Activated CD4-positive, alpha-beta memory T cell treated with anti-CD3 and anti-CD28 coated beads, Interleukin-2, amount 10 ng/mL, durations not matched to agents 7 days and 5 days (primary cell): ENCODE measurements at regions of chr1 and their contacts with region 1.

Region 1: DNA sequence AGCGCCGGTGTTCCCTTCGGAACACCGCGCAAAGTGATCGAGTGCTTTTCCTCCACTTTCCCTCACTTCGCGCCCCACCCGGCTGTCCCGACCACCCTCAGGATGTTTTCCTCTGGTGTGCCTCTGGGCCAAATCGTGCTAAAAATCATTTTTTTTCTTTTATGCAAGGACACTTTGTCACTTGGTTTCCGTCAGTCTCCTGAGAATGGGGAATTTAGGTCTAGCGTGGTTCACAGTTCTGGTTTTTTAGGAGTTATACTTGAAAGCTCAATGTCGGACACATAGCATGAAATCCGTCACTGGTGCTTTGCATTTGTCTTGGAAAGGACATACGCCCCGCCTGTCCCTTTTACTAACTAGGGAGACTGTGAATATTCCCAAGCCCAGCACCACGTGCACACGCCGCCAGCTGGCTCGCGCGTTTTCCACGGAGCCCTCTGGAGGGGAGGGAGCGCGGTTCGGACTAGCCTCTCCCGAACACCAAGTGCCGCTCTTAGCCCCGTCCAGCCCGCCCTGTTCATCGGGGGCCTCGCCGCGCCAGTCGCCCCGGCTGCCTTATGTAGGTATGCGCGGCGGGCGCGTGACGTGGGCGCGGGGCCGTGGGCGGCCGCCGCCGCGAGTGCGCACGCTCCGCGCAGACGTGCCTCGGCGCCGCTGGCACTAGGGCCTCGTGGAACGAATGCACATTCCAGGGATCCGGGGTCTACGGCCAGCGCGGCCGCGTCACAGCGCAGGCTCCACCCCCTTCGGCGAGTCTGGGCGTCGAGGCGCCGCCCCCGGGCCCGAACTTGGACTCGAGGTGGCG is 572 bp upstream of the IRF2BP2 start:
- DNase-seq: peak; percentile 90
- H3K4me3 Mint-ChIP-seq: peak overlapping the region; percentile 82
- H3K27ac Mint-ChIP-seq: peak overlapping the region; percentile 95
- H3K4me1 Mint-ChIP-seq: peaks cover 44% of the 10 kb centered on the region
- H3K27me3 Mint-ChIP-seq: no peaks in the 10 kb centered on the region

Region 2: DNA sequence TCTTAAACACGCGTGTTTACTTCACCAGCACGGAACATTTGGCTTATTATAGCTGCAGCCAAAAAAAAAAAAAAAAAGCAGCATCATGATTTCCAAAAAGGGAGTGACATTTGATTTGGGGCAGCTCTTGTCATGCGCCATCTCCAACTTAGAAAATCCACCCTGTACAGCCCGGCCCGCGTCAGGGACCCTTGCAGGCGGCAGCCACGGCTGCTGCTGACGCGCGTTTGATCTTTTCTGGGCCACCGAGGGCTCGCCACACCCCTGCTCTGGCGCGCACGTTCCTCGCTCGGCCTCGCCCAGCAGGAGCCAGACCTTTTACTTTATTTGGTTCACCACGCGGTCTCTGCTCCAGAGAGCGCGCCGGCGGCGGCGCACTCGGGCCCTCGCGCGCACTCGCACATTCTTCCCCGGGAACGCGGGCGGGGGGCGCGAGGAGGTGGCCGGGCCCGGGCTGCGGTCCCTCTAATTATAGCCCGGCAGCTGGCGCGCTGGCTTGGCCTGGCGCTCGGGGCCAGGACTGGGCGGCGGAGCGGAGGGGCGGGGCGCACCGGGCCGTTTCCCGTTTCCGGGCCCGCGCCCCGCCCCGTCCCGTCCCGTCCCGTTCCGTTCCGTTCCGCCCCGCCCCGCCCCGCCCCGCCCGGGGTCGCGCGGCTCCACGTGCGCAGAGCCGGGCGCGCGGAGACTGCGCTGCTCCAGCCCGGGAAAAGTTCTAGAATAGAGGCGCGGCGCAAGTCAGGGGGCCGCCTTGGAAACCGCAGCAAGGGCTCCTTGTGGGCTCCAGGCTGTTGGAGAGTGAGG is 10.7 kb before region 1 on chr1:
- CTCF ChIA-PET with region 1: interaction called, 11 read pairs
- POLR2A ChIA-PET with region 1: interaction called, 152 read pairs
- DNase-seq: peak; percentile 77
- H3K4me3 Mint-ChIP-seq: peak overlapping the region; percentile 85
- H3K27ac Mint-ChIP-seq: peak overlapping the region; percentile 96
- H3K4me1 Mint-ChIP-seq: peaks cover 52% of the 10 kb centered on the region
- H3K27me3 Mint-ChIP-seq: no peaks in the 10 kb centered on the region

Region 3: DNA sequence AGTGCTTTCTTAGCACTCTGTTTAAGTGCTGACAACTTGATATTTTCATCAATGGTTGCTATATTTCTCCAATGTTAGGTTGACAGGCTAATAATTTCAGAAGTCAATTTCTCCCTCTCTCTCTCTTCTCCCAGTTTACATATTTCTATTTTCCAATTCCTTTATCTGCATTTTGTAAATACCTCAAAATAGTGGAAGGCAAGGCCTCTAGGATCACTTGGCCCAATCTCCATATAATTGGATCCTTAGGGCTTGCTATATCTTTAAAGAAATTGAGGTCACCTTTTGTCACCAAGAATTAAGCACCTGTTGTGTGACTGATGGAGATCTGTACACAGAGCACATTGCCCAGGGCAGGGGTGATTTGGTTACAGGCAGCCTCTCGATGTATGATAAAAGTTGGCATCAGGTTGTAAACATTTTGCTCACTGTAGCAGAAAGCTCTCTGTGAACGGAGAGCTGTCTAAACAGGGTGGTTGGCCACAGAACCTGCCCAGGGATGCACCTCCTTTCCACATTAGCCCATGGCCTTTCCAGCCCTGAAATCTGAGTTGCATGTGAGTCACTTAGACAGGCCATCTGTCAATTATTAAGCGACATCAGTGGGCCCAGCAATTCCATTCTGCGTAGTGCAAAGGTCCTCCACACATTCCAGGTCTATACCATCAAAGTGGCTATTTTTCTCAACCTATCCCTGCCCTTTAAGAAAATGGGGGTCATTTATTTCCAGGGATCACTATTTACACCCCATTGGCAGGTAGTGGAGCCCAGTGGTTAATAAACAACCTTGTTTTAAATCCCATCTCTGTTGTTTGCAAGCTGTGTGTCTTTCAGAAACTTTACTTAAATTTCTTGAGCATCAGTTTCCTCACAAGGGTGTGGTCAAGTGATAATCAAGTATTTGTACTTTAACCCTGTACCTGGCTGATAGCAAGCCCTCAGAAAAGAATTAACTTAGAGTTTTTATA is 28.6 kb after region 1 on chr1:
- CTCF ChIA-PET with region 1: no interaction called
- POLR2A ChIA-PET with region 1: no interaction called
- DNase-seq: no peak
- H3K4me3 Mint-ChIP-seq: no peak overlapping the region
- H3K27ac Mint-ChIP-seq: no peak overlapping the region
- H3K4me1 Mint-ChIP-seq: peaks cover 2% of the 10 kb centered on the region
- H3K27me3 Mint-ChIP-seq: peaks cover 2% of the 10 kb centered on the region

Region 4: GRCh38 chr1:234730770-234731568 is 120.4 kb after region 1 on chr1:
- CTCF ChIA-PET with region 1: interaction called, 29 read pairs
- POLR2A ChIA-PET with region 1: interaction called, 180 read pairs
- DNase-seq: peak; percentile 59
- H3K4me3 Mint-ChIP-seq: peak overlapping the region; percentile 38
- H3K27ac Mint-ChIP-seq: peak overlapping the region; percentile 92
- H3K4me1 Mint-ChIP-seq: peaks cover 68% of the 10 kb centered on the region
- H3K27me3 Mint-ChIP-seq: no peaks in the 10 kb centered on the region

Region 5: GRCh38 chr1:234925440-234926263 is 315.1 kb after region 1 on chr1:
- CTCF ChIA-PET with region 1: interaction called, 5 read pairs
- POLR2A ChIA-PET with region 1: interaction called, 38 read pairs
- DNase-seq: no peak
- H3K4me3 Mint-ChIP-seq: peak overlapping the region; percentile 53
- H3K27ac Mint-ChIP-seq: peak overlapping the region; percentile 87
- H3K4me1 Mint-ChIP-seq: peaks cover 40% of the 10 kb centered on the region
- H3K27me3 Mint-ChIP-seq: no peaks in the 10 kb centered on the region

Region 6: DNA sequence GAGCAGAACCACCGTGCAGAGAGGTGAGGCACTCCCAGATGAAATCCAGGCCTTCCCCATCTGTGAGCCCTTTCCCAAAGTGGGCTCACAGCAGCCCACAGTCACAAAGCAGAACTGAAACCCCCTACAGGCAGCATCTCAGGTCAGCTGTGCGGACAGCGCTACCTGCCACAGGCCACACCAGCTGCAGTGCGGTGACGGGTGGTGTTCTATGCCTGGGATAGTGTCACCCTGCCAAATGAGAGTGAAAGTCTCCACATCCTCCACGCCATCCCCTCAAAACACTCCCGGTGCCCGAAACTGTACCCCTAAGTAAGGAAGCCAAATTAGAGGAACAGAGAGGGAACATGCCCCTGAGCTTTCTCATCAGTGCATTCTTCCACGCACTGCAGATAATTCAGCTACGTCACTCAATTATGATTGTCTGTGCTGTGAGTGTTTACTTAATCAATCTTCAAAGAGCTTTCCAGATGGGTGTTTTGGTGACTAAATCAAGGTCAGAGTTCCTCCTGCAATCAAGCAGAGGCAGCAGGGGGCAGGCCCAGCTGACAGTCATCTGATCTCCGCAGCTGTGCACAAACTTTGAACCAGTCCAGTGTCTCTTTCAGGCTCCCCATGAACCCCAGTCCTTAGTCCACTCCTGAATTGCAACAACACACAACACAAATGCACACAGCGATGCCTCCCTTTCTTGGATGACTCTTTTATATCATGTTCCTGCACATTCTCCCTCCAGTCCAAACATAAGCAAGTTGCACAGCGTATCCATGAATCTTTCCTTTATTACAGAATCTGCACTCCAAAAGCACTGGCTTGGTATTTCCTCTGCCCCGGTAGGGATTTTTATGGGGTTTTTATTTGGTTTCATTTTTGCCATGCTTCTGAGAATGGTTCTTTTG is 368.1 kb after region 1 on chr1:
- CTCF ChIA-PET with region 1: interaction called, 3 read pairs
- POLR2A ChIA-PET with region 1: interaction called, 45 read pairs
- DNase-seq: peak; percentile 69
- H3K4me3 Mint-ChIP-seq: peak overlapping the region; percentile 71
- H3K27ac Mint-ChIP-seq: peak overlapping the region; percentile 94
- H3K4me1 Mint-ChIP-seq: peaks cover 83% of the 10 kb centered on the region
- H3K27me3 Mint-ChIP-seq: no peaks in the 10 kb centered on the region

Region 7: DNA sequence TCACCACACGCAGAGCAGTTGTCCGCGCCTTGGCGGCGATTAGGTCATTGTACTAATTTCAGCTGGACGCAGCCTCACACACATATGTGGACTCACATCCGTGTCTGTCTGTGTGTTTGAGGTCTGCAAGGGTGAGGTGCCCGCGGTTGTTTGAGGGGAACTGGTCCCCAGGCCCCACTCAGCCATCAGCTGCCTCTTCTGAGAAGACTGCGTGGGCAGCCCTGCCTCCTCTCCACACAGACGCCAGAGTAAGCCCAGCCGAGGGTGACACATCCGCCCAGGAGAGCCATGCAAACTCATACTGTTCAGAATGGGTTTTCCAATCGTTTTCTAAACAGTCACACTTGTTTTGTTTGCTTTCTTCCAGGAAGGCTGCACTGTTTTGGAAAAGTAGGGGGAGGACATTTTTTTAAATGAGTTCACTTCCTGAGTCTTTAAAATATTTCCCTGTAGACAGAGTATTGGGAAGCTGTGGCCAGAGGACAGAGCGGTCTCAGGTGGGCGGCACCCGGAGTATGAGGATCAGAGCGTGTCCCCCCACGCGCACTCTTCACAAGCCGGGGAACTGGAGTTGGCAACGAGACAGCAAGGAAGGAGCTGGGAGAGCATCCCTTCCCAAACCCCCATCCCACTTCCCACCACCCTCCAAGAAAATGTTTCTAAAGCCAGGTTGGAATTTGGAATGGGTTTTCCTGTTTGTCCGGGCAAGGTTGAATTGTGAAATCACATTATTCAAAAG is 464.8 kb after region 1 on chr1:
- CTCF ChIA-PET with region 1: no interaction called
- POLR2A ChIA-PET with region 1: interaction called, 31 read pairs
- DNase-seq: peak; percentile 75
- H3K4me3 Mint-ChIP-seq: peak overlapping the region; percentile 51
- H3K27ac Mint-ChIP-seq: peak overlapping the region; percentile 91
- H3K4me1 Mint-ChIP-seq: peaks cover 37% of the 10 kb centered on the region
- H3K27me3 Mint-ChIP-seq: no peaks in the 10 kb centered on the region